Esophagus muscularis mucosa (tissue), 4 donors: ENCODE measurements at regions of chr22 and their contacts with region 1.

Region 1: GRCh38 chr22:50474668-50475492 is at the start of gene SBF1:
- DNase-seq: peak; percentile 96
- H3K4me3 ChIP-seq: peak within 1 kb of the TSS; percentile 84 to 98 (median 94)
- H3K27ac ChIP-seq: peak within 1 kb of the TSS; percentile 85 to 90 (median 90)
- H3K4me1 ChIP-seq: peaks cover 43 to 53% (median 50%) of the 10 kb centered on the region in 4 donors
- H3K27me3 ChIP-seq: peaks cover 0 to 15% (median 0%) of the 10 kb centered on the region in 4 donors
- CTCF ChIP-seq: no peak
- EP300 ChIP-seq: no peak
- POLR2A ChIP-seq: peak; percentile 8
- total RNA-seq, gene SBF1: 56.1 to 121 (median 86.9) TPM

Region 2: GRCh38 chr22:50244420-50245213 is 230.3 kb before region 1 on chr22 and contains the start of gene TUBGCP6:
- intact Hi-C with region 1: loop called (anchors 10 kb)
- DNase-seq: peak; percentile 98
- H3K4me3 ChIP-seq: peak within 1 kb of the TSS; percentile 79 to 93 (median 86)
- H3K27ac ChIP-seq: peak within 1 kb of the TSS; percentile 89 to 97 (median 96)
- H3K4me1 ChIP-seq: peaks cover 50 to 85% (median 73%) of the 10 kb centered on the region in 4 donors
- H3K27me3 ChIP-seq: no peaks in the 10 kb centered on the region
- CTCF ChIP-seq: peak in 2 of 3 experiments; percentile 33 to 49
- EP300 ChIP-seq: no peak
- POLR2A ChIP-seq: peak; percentile 44
- total RNA-seq, gene TUBGCP6: 20.2 to 38.0 (median 30.0) TPM

Region 3: GRCh38 chr22:50612528-50613221 is 137.8 kb after region 1 on chr22:
- intact Hi-C with region 1: no loop called
- DNase-seq: no peak
- H3K4me3 ChIP-seq: no peak overlapping the region
- H3K27ac ChIP-seq: no peak overlapping the region
- H3K4me1 ChIP-seq: peaks cover 0 to 5% (median 0%) of the 10 kb centered on the region in 4 donors
- H3K27me3 ChIP-seq: peaks cover 0 to 60% (median 2%) of the 10 kb centered on the region in 4 donors
- CTCF ChIP-seq: no peak
- EP300 ChIP-seq: no peak
- POLR2A ChIP-seq: no peak